IMR-90 (cell line): ENCODE measurements at regions of chr20 and their contacts with region 1.

Region 1: GRCh38 chr20:34825530-34826362 is at the start of gene NCOA6:
- DNase-seq: peak; percentile 74
- ATAC-seq: peak; percentile 85
- H3K4me3 ChIP-seq: peak within 1 kb of the TSS; percentile 70
- H3K27ac ChIP-seq: peak within 1 kb of the TSS; percentile 70
- H3K4me1 ChIP-seq: no peaks in the 10 kb centered on the region; the same call in none of the 2 replicates
- H3K27me3 ChIP-seq: no peaks in the 10 kb centered on the region; the same call in none of the 2 replicates
- CTCF ChIP-seq: no peak
- POLR2A ChIP-seq: no peak
- RAD21 ChIP-seq: no peak
- total RNA-seq, gene NCOA6: 3.6 and 3.9 TPM in 2 replicates

Region 2: DNA sequence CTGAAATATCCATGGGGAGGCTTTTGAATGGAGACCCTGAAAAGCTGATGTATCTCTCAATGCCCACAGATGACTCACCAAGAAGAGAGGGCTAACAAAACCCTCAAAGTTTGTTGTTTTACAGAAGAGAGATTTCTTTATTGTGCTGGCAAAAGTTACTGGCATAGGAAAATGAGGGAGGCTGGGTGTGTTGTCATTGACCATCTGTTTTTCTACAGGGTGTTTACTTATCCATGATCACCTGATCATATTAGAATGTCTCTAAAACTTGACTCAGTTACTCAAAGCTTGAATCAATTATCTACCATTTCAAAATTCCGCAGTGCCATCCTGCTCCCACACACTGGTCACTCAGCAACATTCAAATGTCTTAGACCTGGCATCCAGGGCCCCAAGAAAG is 10.1 kb before region 1 on chr20:
- CTCF ChIA-PET with region 1: no interaction called
- POLR2A ChIA-PET with region 1: no interaction called
- dilution Hi-C with region 1: no loop called
- in situ Hi-C with region 1: no loop called
- intact Hi-C with region 1: loop called (anchors 1 kb)
- DNase-seq: peak; percentile 33
- ATAC-seq: peak; percentile 37; the same call in 1 of the 2 replicates
- H3K4me3 ChIP-seq: no peak overlapping the region
- H3K27ac ChIP-seq: no peak overlapping the region
- H3K4me1 ChIP-seq: peaks cover 3% of the 10 kb centered on the region
- H3K27me3 ChIP-seq: no peaks in the 10 kb centered on the region
- CTCF ChIP-seq: no peak
- POLR2A ChIP-seq: no peak
- RAD21 ChIP-seq: no peak

Region 3: DNA sequence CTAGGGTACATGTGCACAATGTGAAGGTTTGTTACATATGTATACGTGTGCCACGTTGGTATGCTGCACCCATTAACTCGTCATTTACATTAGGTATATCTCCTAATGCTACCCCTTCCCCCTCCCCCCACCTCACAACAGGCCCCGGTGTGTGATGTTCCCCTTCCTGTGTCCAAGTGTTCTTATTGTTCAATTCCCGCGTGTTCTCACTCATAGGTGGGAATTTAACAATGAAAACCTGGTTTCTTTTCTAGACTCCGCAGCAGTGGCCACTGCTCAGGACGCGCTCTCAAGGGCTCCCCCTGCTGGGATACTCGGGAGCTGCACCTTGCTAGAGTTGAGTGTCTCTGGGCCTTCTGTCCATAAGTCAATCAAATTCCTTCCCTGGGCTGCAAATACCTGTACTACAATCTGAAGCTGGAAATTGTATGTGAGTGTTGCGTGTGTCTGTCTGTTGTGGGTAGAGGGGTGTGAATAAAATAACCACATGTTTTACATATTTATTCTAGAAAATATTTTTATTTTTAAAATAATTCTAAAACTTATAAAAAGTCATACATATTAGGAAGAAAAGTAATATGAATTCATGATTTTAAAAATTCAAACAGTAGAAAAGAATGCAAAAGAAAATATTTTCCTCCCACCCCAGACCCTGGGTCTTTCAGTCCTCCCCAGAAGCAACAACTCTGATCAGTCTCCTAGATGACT is 621.5 kb after region 1 on chr20:
- CTCF ChIA-PET with region 1: no interaction called
- POLR2A ChIA-PET with region 1: no interaction called
- dilution Hi-C with region 1: no loop called
- in situ Hi-C with region 1: loop called (anchors 25 kb)
- intact Hi-C with region 1: no loop called
- DNase-seq: peak; percentile 73
- ATAC-seq: peak; percentile 96
- H3K4me3 ChIP-seq: peak overlapping the region; percentile 32; the same call in 1 of the 2 replicates
- H3K27ac ChIP-seq: no peak overlapping the region
- H3K4me1 ChIP-seq: peaks cover 2% of the 10 kb centered on the region
- H3K27me3 ChIP-seq: no peaks in the 10 kb centered on the region
- CTCF ChIP-seq: peak; percentile 85
- POLR2A ChIP-seq: no peak
- RAD21 ChIP-seq: peak; percentile 82